A549 (cell line): ENCODE measurements at regions of chr5 and their contacts with region 1.

Region 1: GRCh38 chr5:64622991-64623390 is 67.3 kb upstream of the SHISAL2B start:
- DNase-seq: no peak
- ATAC-seq: no peak
- H3K4me3 ChIP-seq: no peak overlapping the region
- H3K27ac ChIP-seq: no peak overlapping the region
- H3K4me1 ChIP-seq: no peaks in the 10 kb centered on the region
- CTCF ChIP-seq: no peak
- EP300 ChIP-seq: no peak
- POLR2A ChIP-seq: no peak
- RAD21 ChIP-seq: no peak

Region 2: DNA sequence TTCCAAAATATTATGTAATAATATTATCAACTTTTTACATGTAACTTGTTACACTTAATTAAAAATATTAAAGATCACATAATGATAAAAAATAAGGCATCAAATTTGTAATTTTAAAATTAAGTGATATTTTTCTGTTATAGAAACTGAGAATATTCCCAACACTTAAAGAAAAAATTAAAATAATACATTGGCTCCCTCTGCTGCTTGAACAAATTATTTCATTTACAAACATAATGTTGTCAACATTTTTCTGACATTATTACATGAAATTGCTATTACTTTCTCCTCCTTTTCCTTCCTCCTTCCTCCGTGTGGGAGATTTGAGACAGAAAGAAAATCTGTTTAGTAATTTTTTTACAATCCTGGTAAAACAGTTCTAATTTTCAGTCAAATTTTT is 415.0 kb before region 1 on chr5:
- CTCF ChIA-PET with region 1: no interaction called
- POLR2A ChIA-PET with region 1: no interaction called
- DNase-seq: peak in 1 of 2 experiments; percentile 14
- ATAC-seq: no peak
- H3K4me3 ChIP-seq: no peak overlapping the region
- H3K27ac ChIP-seq: no peak overlapping the region
- H3K4me1 ChIP-seq: no peaks in the 10 kb centered on the region
- CTCF ChIP-seq: peak; percentile 43
- EP300 ChIP-seq: no peak
- POLR2A ChIP-seq: no peak
- RAD21 ChIP-seq: peak; percentile 50 to 62

Region 3: DNA sequence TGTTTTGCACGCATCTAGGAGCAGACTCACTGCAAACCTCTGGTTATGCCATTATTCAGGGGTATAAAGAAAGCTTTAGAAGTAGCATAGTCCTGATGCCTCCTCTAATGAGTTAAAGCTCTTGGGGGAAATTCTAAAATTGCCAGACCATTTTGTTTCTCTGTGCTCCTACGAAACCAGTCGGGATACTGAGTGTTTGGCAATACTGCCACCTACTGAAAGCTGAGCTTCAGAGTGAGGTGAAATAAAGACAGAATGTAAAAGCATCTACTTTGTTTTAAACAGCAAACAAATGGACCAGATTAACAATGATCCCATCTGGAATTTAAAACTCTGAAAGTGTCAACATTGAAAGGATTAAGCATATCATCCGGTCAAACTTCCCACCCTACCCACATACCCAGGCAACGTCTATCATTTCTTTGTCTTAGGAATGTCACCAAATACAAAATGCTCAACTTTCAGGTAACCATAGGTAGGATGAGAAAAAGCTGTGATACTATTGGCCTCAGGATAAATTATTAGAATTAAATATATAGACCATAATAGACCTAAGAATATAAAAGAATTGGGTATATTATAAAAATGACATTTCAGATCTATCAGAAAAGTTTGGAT is 10.5 kb before region 1 on chr5:
- CTCF ChIA-PET with region 1: interaction called, 16 read pairs
- POLR2A ChIA-PET with region 1: no interaction called
- DNase-seq: peak; percentile 7 to 53
- ATAC-seq: peak; percentile 80 to 81; a peak in 5 of 6 replicates
- H3K4me3 ChIP-seq: no peak overlapping the region
- H3K27ac ChIP-seq: no peak overlapping the region
- H3K4me1 ChIP-seq: no peaks in the 10 kb centered on the region
- CTCF ChIP-seq: peak; percentile 83
- EP300 ChIP-seq: no peak
- POLR2A ChIP-seq: no peak
- RAD21 ChIP-seq: peak; percentile 80 to 87